ENCODE measurements at regions of chr12 and their contacts with region 1.

Region 1: DNA sequence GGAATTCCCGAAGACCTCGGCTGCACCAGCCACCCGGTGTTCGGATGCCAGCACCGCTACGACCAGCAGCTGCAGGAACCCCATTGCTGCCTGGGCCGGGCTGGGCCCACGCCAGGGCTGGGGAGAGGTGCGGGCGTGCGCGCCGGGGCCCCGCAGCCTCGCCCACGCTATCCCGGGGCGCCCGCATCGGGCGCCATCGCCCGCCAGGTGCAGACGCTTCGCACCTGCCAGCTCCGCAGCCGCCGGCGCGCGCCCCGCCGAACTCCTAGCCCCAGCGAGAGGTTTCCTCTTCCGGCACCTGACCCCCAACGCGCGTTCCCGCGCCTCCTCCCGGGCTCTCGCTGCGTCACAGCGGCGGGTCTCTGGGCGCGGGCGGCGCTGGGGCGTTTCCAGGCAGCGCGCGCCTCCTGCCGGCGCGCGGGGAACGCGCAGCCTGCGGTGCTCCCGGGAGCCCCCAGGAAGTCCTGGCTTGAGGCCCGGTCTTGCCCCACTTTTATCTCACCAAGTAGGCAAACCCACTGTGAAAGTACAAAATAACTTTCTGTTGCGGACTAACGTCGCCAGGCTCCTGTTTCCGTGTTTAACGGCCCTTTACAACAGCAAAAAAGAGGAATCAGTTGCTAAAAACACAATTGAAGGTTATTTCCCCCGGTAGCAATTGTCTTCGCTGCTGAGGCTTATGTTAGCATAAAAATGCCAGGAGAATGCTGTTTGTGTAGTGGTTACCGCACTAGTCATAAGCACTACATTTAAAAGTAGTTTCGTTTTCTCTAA is at the start of gene TM7SF3:
- DNase-seq: peak; percentile 89
- ATAC-seq: peak; percentile 90
- H3K4me3 ChIP-seq: peak within 1 kb of the TSS; percentile 73
- H3K27ac ChIP-seq: peak within 1 kb of the TSS; percentile 82 to 90
- H3K4me1 ChIP-seq: peaks cover 35% of the 10 kb centered on the region
- CTCF ChIP-seq: peak; percentile 93
- EP300 ChIP-seq: no peak
- POLR2A ChIP-seq: peak; percentile 70
- RAD21 ChIP-seq: peak; percentile 66 to 96
- polyA plus RNA-seq, gene TM7SF3: 177 and 329 TPM in 2 replicates

Region 2: DNA sequence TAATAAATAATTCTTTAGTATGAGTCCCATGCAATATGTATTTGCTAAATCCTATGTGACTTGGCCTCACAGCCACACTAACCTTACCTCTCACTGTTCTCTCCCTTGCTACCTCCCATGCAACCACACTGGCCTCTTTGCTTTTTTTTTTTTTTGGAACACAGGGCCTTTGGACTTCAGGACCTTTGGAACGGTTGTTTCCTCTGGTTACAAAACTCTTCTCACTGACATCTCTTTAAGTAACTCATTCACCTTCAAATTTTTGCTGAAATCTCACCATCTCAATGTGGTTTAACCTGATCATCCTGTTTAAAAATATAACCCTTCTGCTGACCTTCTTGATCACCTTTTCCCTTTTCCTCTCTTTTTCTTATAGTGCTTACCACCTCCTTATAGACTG is 624.9 kb before region 1 on chr12:
- CTCF ChIA-PET with region 1: no interaction called
- POLR2A ChIA-PET with region 1: no interaction called
- DNase-seq: no peak
- ATAC-seq: no peak
- H3K4me3 ChIP-seq: no peak overlapping the region
- H3K27ac ChIP-seq: no peak overlapping the region
- H3K4me1 ChIP-seq: no peaks in the 10 kb centered on the region
- CTCF ChIP-seq: no peak
- EP300 ChIP-seq: no peak
- POLR2A ChIP-seq: no peak
- RAD21 ChIP-seq: no peak

Region 3: DNA sequence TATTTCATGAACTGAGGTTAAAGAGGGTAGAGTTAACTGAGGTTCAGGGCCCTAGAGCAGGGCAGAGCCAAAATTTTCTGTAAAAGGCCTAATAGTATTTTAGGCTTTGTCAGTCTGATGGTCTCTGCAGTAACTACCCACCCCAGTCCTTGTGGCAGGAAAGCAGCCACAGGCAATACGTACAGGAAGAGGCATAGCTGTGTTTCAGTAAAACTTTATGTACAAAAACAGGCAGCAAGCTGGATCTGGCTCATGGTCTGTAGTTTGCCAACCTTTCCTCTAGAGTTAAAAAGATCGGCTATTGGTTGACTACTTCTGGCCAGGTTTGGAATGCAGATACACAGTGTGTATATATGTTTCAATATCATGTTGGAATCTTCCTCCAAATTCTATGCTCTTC is 17.3 kb before region 1 on chr12:
- CTCF ChIA-PET with region 1: interaction called, 11 read pairs
- POLR2A ChIA-PET with region 1: no interaction called
- DNase-seq: no peak
- ATAC-seq: no peak
- H3K4me3 ChIP-seq: no peak overlapping the region
- H3K27ac ChIP-seq: no peak overlapping the region
- H3K4me1 ChIP-seq: peaks cover 3% of the 10 kb centered on the region; the same call in 1 of the 3 replicates
- CTCF ChIP-seq: no peak
- EP300 ChIP-seq: no peak
- POLR2A ChIP-seq: no peak
- RAD21 ChIP-seq: no peak

Region 4: DNA sequence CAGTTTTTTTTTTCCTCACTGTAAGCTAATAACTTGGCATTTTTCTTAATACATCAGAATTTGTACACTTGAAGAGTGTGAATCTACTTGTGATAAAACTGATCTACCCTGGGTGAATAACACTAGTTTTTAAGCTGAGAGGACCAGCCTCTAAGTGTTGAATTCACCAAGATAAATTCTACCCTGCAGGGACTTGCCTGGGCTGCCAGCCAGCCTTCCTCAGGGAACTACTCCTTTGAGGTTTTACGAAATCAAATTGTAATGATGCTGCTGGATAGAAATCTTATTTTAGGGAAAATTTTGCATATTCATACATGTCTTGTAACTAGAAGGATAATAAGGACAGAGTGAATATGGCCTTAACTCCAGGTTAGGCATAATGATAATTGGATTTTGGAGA is 10.0 kb after region 1 on chr12:
- CTCF ChIA-PET with region 1: interaction called, 11 read pairs
- POLR2A ChIA-PET with region 1: interaction called, 10 read pairs
- DNase-seq: no peak
- ATAC-seq: no peak
- H3K4me3 ChIP-seq: no peak overlapping the region
- H3K27ac ChIP-seq: no peak overlapping the region
- H3K4me1 ChIP-seq: peaks cover 21% of the 10 kb centered on the region
- CTCF ChIP-seq: no peak
- EP300 ChIP-seq: no peak
- POLR2A ChIP-seq: no peak
- RAD21 ChIP-seq: no peak

Region 5: DNA sequence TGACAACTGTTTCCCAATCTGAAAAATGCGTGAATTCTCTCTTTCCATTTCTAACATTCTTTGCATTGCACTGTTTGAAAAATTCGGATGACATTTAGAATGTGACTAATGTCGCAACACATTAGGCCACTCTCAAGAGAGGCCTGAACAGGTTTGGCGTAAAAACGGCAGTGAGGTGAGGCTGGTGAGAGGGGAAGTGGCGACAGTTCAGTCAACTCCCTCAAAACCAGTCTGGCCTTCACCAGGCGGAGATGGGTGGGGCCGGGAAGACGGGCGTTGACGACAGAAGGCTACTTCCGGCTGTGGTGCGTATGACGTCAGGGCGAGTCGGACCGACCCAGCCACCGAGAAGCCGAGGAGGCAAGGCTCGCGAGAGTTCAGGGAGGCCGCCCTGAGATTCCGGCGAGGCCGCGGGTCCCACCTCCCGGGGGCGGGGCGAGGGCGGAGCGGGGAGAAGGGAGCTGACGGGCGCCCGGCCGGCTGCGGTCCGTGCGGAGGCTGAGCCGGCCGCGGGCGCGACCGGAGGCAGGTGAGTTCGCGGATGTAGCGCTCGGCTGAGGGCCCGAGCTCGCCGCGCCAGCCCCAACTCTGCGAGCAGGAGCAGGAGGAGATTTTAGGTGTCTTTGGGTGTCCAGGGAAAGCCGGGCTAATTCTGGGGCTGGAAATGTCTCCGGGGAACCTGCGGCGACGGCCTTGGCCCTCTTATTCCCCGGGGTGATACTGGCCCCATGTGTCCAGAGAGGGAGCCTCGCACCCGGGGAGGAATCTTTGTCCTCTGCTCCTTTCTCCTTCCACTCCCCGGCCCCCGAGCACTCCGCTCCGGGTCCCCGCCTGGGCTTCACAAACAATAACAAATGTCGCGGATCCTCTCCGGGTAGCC is 229.8 kb after region 1 on chr12 and contains the start of gene STK38L:
- CTCF ChIA-PET with region 1: interaction called, 12 read pairs
- POLR2A ChIA-PET with region 1: interaction called, 16 read pairs
- DNase-seq: peak; percentile 87 to 99
- ATAC-seq: peak; percentile 98 to 100
- H3K4me3 ChIP-seq: peak within 1 kb of the TSS; percentile 83
- H3K27ac ChIP-seq: peak within 1 kb of the TSS; percentile 78 to 89
- H3K4me1 ChIP-seq: peaks cover 11% of the 10 kb centered on the region
- CTCF ChIP-seq: peak; percentile 42; the same call in 1 of the 3 replicates
- EP300 ChIP-seq: no peak
- POLR2A ChIP-seq: peak; percentile 95
- RAD21 ChIP-seq: peak; percentile 58 to 74
- polyA plus RNA-seq, gene STK38L: 24.2 and 32.2 TPM in 2 replicates

Region 6: GRCh38 chr12:27277846-27278260 is 263.6 kb after region 1 on chr12:
- CTCF ChIA-PET with region 1: interaction called, 10 read pairs
- POLR2A ChIA-PET with region 1: no interaction called
- DNase-seq: peak in 1 of 2 experiments; percentile 62
- ATAC-seq: peak; percentile 68 to 72; a peak in 5 of 6 replicates
- H3K4me3 ChIP-seq: no peak overlapping the region
- H3K27ac ChIP-seq: no peak overlapping the region
- H3K4me1 ChIP-seq: peaks cover 15% of the 10 kb centered on the region
- CTCF ChIP-seq: no peak
- EP300 ChIP-seq: no peak
- POLR2A ChIP-seq: no peak
- RAD21 ChIP-seq: no peak

Region 7: GRCh38 chr12:27305673-27306456 is 291.6 kb after region 1 on chr12:
- CTCF ChIA-PET with region 1: interaction called, 104 read pairs
- POLR2A ChIA-PET with region 1: interaction called, 6 read pairs
- DNase-seq: peak; percentile 15 to 49
- ATAC-seq: 0 out of 6 replicates have a peak, but pooled peaks of 1 of the 2 experiments have one; percentile 39
- H3K4me3 ChIP-seq: no peak overlapping the region
- H3K27ac ChIP-seq: no peak overlapping the region
- H3K4me1 ChIP-seq: peaks cover 10% of the 10 kb centered on the region; the same call in 2 of the 3 replicates
- CTCF ChIP-seq: peak; percentile 68; the same call in 2 of the 3 replicates
- EP300 ChIP-seq: no peak
- POLR2A ChIP-seq: no peak
- RAD21 ChIP-seq: peak; percentile 74 to 88

Measured in A549 (cell line).